Activated T-helper 1 cell treated with anti-CD3 and anti-CD28 coated beads, Interleukin-12 subunit alpha, Interleukin-12 subunit beta, Interleukin-2, Interleukin-4 antibody, amounts not matched to agents 30 ng/mL and 10 ng/mL and 1 ng/mL, durations not matched to agents 14 hours and 24 hours and 36 hours (primary cell): ENCODE measurements at regions of chr12 and their contacts with region 1.

Region 1: DNA sequence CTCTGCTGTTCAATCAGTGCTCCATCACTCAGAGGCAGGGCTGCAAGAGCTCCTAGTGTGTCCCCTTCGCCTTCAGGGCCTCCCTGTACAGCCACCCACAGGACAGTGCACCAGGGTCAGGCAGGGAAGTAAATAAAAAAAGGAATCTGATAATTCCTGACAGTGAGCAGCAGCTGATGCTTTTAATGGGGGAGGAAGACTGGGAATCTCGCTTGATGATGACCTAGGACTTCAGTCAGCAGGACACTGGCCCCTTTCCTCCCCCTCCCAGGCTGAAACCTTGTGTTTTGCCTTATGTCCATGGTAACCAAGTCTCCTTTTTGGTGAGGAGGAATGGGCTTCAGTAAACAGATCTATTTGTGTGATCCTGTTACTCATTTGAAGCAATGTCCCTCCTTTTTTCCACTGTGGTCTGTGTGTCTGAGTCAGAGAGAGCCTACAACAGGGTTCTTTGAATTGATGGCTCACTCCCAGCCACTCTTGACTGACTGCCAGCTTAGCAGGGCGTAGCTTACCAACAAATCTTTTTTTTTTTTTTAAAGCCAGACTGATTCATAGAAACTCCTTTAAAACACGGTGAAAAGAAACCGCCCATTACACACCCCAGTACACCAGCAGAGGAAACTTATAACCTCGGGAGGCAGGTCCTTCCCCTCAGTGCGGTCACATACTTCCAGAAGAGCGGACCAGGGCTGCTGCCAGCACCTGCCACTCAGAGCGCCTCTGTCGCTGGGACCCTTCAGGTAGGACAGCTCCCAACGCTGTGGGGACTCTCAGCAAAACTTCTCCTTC is at the start of gene EMP1:
- DNase-seq: peak; percentile 65
- H3K4me3 Mint-ChIP-seq: peak within 1 kb of the TSS; percentile 79
- H3K27ac Mint-ChIP-seq: peak within 1 kb of the TSS; percentile 81
- H3K4me1 Mint-ChIP-seq: peaks cover 30% of the 10 kb centered on the region
- H3K27me3 Mint-ChIP-seq: peaks cover 19% of the 10 kb centered on the region
- total RNA-seq, gene EMP1: 29.6 and 33.6 TPM in 2 replicates

Region 2: DNA sequence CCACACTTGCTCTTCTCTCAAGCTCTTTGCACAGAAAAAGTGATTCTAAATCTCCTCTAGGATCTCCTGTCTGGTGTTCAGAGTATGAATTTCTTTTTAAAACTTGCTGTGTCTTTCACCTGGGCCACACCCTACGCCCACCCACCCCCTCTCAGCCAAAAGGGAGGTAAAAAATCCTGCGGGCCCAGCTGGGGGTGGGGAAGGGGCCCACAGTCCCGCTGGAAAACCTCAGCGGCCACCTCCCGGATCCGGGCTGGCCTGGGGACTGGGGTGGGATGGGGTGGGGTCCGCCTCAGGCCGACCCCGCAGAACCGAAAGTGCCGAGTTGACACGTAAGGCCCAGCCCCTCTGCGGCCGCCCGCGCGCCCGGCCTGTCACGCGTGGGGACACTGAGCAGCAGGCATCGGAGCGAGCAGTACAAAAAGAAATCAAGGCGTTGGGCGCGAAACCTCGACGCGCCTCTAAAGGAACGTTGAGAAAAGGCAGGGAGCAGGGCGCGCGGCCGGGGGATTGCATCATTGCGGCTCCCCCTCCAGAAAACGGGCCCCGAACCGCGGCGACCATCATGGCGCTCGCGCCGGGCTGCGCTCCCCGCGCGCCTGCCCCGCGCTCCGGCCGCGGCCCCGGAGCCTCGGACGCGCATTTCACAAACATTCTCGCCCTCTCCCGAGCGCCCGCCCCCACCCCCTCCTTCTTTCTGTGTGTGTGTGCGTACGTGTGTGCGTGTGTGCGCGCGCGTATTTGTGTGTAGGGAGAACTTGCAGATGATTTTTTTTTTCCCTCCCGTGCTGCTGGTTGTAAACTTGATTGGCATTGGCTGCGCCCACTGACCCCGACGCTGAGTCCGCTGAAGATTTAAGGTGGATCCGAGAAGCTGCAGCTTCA is 471.4 kb before region 1 on chr12:
- intact Hi-C with region 1: loop called (anchors 2 kb)
- DNase-seq: peak; percentile 88
- H3K4me3 Mint-ChIP-seq: peak overlapping the region; percentile 90
- H3K27ac Mint-ChIP-seq: peak overlapping the region; percentile 96
- H3K4me1 Mint-ChIP-seq: peaks cover 56% of the 10 kb centered on the region
- H3K27me3 Mint-ChIP-seq: peaks cover 3% of the 10 kb centered on the region

Region 3: DNA sequence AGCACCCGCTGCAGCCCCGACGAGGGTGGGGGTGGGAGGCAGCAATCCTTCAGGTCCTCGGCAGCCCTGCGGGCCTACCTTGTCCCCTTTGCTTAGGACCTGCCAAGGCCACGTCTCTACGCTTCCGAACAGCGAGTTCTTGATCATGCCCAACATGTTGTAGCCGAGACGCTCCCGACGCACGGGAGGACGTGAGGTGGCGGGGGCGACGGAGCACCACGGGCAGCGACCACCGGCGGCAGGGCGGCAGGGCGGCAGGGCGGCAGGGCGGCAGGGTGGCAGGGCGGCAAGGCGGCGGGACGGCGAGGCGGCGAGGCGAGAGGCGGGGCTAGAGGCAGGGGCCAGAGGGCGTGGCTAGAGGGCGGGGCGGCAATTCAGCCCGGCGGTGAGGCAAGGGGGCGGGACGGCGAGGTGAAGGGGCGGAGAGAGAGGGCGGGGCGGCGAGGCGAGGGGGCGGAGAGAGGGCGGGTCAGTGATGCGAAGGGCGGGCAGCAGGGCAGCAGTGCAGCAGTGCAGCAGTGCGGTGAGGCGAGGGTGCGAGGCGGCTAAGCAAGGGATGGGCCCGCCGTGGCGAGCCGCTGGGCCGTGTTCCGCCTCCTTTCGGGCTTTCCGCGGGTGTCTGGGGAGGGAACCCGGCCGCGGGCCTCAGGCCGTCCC is 196.2 kb before region 1 on chr12 and contains the start of gene HEBP1:
- intact Hi-C with region 1: loop called (anchors 1 kb)
- DNase-seq: peak; percentile 91
- H3K4me3 Mint-ChIP-seq: peak within 1 kb of the TSS; percentile 87
- H3K27ac Mint-ChIP-seq: peak within 1 kb of the TSS; percentile 86
- H3K4me1 Mint-ChIP-seq: peaks cover 37% of the 10 kb centered on the region
- H3K27me3 Mint-ChIP-seq: peaks cover 34% of the 10 kb centered on the region
- total RNA-seq, gene HEBP1: 9.5 and 11.3 TPM in 2 replicates

Region 4: GRCh38 chr12:13085968-13086686 is 110.2 kb before region 1 on chr12:
- intact Hi-C with region 1: no loop called
- DNase-seq: no peak
- H3K4me3 Mint-ChIP-seq: no peak overlapping the region
- H3K27ac Mint-ChIP-seq: no peak overlapping the region
- H3K4me1 Mint-ChIP-seq: peaks cover 11% of the 10 kb centered on the region
- H3K27me3 Mint-ChIP-seq: peaks cover 2% of the 10 kb centered on the region

Region 5: DNA sequence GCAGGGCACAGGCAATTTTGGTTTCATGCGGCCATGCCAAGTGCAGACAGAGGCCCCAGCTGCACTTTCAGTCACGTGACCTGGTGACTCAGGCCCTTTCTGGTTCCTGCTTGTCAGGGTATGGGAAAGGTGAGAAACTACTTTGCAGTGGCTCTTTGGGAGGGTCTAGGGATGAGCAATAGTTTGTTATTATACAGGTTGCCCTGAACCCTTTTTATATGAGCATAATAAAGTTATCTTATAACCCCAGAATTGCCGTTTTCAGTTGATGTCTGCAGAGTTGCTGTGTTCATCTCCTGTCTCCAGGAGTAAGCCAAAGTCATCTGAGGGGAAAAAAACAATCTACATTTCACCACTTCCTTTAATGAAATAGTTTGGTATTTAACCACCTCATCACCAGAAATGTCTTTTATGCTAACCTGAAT is 30.7 kb before region 1 on chr12:
- intact Hi-C with region 1: loop called (anchors 1 kb)
- DNase-seq: peak; percentile 54
- H3K4me3 Mint-ChIP-seq: no peak overlapping the region
- H3K27ac Mint-ChIP-seq: no peak overlapping the region
- H3K4me1 Mint-ChIP-seq: peaks cover 19% of the 10 kb centered on the region
- H3K27me3 Mint-ChIP-seq: peaks cover 14% of the 10 kb centered on the region

Region 6: GRCh38 chr12:13179211-13180074 is 16.9 kb before region 1 on chr12:
- intact Hi-C with region 1: loop called (anchors 1 kb)
- DNase-seq: peak; percentile 41
- H3K4me3 Mint-ChIP-seq: peak overlapping the region; percentile 72
- H3K27ac Mint-ChIP-seq: no peak overlapping the region
- H3K4me1 Mint-ChIP-seq: peaks cover 35% of the 10 kb centered on the region
- H3K27me3 Mint-ChIP-seq: peaks cover 28% of the 10 kb centered on the region